Right ventricle myocardium inferior (tissue), 1 donor: ENCODE measurements at regions of chrX and their contacts with region 1.

Region 1: DNA sequence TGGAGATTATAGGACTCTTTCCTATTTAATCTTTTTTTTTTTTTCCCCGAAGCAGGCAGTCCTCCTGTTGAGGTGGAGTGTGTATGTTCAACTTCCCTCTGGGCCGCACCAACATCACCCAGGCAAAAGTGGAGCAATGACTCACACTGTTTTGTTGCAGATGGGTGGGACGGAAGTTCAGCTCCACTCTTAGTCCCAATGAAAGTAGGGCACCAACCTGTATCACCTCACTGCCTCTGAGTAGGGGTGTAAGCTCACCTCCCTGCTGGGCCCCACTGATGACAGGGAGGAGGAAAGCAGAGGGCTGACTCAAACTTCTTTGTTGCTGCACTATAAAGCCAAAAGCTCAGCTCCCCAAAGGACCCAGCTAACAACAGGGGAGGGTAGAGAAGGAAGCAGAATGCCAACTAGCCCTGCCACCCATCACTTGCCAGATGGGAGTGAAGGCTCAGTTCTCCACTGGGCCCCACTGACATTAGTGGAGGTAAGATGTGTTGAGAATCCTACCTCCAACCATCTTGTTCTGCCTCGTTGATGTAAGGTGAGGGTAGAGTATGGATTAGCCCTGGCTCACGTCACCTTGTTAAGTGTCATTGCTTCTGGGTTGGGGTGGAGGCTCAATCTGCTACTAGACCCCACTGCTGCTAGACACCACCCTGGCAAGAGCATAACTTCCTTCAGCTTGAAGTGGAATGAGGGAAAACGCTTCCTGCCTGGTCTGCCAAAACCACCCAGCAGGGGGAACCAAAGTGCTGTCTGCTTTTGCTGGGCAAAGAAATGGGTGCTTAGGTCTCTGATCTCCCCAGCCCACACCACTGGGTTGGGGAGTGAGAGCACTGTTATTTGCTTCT is 14.1 kb downstream of the RPS6KA3 start:
- DNase-seq: peak; percentile 9
- ATAC-seq: no peak

Region 2: DNA sequence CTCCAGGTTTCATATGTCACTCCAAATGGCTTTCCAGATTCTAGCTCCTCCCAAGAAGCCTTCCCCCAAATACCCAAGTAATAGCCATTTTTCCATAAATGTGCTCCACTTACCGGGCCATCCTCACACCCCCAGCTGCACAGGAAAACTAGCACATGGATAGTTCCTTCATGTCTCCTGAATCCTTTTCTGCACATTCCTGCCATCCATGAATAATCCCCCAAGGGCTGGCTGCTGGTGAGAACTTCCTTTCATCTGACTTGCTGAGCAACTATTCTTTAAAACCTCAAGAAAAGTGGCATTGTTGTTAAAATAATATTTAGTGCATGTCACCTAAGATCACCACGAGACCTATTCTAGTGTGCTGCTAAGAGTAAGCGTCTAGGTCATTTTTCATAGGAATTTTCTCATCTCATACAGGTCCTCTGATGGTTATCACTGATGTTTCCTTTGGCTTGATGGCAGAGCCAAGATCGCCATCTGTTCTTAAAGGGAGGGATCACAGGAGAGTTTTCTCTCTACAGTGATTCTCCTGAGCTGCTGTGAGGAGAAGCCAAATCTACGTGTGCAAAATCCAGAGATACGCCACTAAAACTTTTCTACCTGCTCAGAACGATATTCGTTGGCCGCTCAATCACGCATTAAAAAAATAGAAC is 808.6 kb before region 1 on chrX:
- intact Hi-C with region 1: no loop called
- DNase-seq: no peak
- ATAC-seq: no peak

Region 3: GRCh38 chrX:20442597-20442996 is 190.0 kb after region 1 on chrX:
- intact Hi-C with region 1: loop called (anchors 5 kb)
- DNase-seq: peak; percentile 88
- ATAC-seq: peak; percentile 77

Region 4: DNA sequence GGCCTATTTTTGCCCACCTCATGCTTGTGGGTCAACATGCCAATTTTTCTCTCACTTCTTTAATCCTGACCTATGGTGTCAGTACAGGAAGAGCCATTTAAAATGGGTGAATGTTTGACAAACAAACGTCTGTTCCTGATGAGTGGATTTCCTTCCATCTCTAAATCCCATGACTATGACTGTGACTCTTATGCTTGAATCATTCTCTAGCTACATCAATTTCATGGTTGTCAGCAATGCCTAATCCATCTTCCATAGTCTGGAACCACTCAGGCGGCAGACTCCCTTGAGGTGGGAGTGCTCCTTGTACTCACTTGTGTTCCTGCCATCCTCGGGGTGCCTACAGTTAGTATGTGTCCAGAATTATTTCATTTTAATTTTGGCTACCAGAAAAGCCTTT is 209.0 kb after region 1 on chrX:
- intact Hi-C with region 1: no loop called
- DNase-seq: no peak
- ATAC-seq: no peak